ENCODE measurements at regions of chr1 and their contacts with region 1.

Region 1: DNA sequence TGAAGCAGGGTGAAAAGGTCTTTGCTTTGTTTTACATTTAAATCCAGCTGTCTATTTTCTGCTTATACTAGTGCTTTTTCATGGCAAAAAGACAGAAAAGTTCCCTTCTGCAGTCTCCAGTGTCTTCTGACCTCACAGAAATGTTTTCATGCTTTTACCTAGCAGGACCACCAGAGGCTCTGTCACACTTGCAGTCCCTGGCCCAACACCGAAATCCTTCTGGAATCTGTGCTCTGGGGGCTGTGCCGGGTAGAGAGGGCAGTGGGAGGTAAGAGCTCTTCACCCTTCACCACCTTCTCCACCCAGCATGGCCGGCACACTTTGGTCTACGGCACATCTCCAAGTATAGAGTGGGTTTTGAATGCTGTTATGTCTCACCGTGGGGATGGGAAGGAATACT is 20.8 kb downstream of the GNAT2 start:
- DNase-seq: no peak
- H3K4me3 ChIP-seq: no peak overlapping the region
- H3K4me3 Mint-ChIP-seq: no peak overlapping the region
- H3K27ac ChIP-seq: no peak overlapping the region
- H3K27ac Mint-ChIP-seq: peak overlapping the region in 2 of 7 donors; percentile 42 to 69
- H3K4me1 ChIP-seq: peaks cover 9% of the 10 kb centered on the region
- H3K4me1 Mint-ChIP-seq: peaks cover 9 to 18% (median 14%) of the 10 kb centered on the region in 4 donors
- H3K27me3 ChIP-seq: no peaks in the 10 kb centered on the region
- H3K27me3 Mint-ChIP-seq: no peaks in the 10 kb centered on the region

Region 2: GRCh38 chr1:109570417-109570827 is 28.2 kb before region 1 on chr1:
- CTCF ChIA-PET with region 1: no interaction called
- POLR2A ChIA-PET with region 1: no interaction called
- intact Hi-C with region 1: loop called (anchors 5 kb)
- DNase-seq: no peak
- H3K4me3 ChIP-seq: no peak overlapping the region
- H3K4me3 Mint-ChIP-seq: no peak overlapping the region
- H3K27ac ChIP-seq: no peak overlapping the region
- H3K27ac Mint-ChIP-seq: no peak overlapping the region
- H3K4me1 ChIP-seq: peaks cover 35% of the 10 kb centered on the region
- H3K4me1 Mint-ChIP-seq: peaks cover 18 to 40% (median 32%) of the 10 kb centered on the region in 4 donors
- H3K27me3 ChIP-seq: no peaks in the 10 kb centered on the region
- H3K27me3 Mint-ChIP-seq: no peaks in the 10 kb centered on the region

Region 3: DNA sequence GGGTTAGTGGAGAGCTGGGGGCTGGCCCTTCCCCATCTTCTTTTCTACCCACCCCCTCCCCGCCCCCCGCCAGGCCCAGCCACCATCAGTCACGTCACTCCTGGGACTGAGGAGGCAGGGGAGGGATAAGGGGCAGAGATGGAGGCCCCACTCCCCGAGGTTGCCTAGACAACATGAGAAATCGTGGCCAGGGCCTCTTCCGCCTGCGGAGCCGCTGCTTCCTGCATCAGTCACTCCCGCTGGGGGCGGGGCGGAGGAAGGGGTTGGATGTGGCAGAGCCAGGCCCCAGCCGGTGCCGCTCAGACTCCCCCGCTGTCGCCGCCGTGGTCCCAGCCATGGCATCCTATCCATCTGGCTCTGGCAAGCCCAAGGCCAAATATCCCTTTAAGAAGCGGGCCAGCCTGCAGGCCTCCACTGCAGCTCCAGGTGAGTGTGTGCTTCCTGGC is 22.2 kb after region 1 on chr1:
- CTCF ChIA-PET with region 1: interaction called, 4 read pairs
- POLR2A ChIA-PET with region 1: no interaction called
- intact Hi-C with region 1: loop called (anchors 2 kb)
- DNase-seq: peak; percentile 96 to 99 (median 97)
- H3K4me3 ChIP-seq: peak overlapping the region; percentile 76 to 93
- H3K4me3 Mint-ChIP-seq: peak overlapping the region; percentile 92 to 99 (median 96)
- H3K27ac ChIP-seq: peak overlapping the region; percentile 96
- H3K27ac Mint-ChIP-seq: peak overlapping the region; percentile 91 to 99 (median 99)
- H3K4me1 ChIP-seq: peaks cover 72% of the 10 kb centered on the region
- H3K4me1 Mint-ChIP-seq: peaks cover 47 to 86% (median 58%) of the 10 kb centered on the region in 4 donors
- H3K27me3 ChIP-seq: no peaks in the 10 kb centered on the region
- H3K27me3 Mint-ChIP-seq: no peaks in the 10 kb centered on the region

Region 4: GRCh38 chr1:109630081-109630897 is 31.6 kb after region 1 on chr1:
- CTCF ChIA-PET with region 1: interaction called, 17 read pairs
- POLR2A ChIA-PET with region 1: no interaction called
- intact Hi-C with region 1: no loop called
- DNase-seq: peak in 2 of 5 donors; percentile 21 to 39
- H3K4me3 ChIP-seq: no peak overlapping the region
- H3K4me3 Mint-ChIP-seq: no peak overlapping the region
- H3K27ac ChIP-seq: no peak overlapping the region
- H3K27ac Mint-ChIP-seq: peak overlapping the region in 4 of 7 donors; percentile 13 to 73 (median 54)
- H3K4me1 ChIP-seq: peaks cover 13% of the 10 kb centered on the region
- H3K4me1 Mint-ChIP-seq: peaks cover 9 to 15% (median 11%) of the 10 kb centered on the region in 4 donors
- H3K27me3 ChIP-seq: no peaks in the 10 kb centered on the region
- H3K27me3 Mint-ChIP-seq: no peaks in the 10 kb centered on the region